ENCODE measurements at regions of chr5 and their contacts with region 1.

Region 1: DNA sequence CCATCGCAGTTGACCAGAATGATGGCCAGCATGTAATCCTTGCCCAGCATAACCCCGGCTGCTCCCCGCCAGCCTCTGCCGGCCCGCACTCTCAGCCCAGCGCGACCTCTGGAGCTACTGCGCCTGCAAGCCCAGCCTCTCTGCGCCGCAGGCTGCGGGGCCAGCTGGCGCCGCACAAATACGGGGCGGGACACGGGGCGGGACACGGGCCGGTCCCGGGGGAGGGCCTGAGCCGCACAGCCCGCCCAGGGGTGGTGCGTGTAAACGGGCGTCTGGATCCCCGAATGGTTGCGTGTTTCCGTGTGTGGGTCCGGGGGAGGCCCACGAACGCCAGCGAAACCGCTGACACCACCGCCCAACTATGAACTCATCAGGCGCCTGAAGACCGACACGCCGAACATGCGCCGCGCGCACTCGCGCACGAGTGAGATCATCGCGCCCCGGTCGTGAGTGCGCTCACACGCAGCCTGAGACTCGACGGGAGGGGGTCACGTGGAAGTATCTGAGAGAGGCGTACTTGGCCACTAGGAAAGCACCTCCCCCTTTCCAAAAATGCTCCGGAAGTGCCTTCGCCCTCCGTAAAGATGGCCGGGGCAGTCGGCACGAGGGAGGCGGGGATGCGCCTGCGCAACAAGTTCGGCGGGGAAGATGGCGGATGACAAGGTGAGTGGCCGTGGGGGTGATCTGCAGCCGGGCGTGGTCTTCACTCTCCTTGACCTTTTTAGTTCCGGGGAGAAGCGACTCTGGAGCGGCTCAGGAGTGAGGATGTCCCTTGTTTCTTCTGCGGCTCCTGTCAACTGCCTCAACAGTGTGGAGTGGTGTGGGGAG is at the starts of genes APBB3 and SLC35A4:
- DNase-seq: peak; percentile 97
- H3K4me3 ChIP-seq: peak within 1 kb of the TSS; percentile 48 to 63 (median 57)
- H3K27ac ChIP-seq: peak within 1 kb of the TSS; percentile 92 to 94 (median 93)
- H3K4me1 ChIP-seq: peaks cover 20 to 38% (median 25%) of the 10 kb centered on the region in 4 donors
- H3K27me3 ChIP-seq: no peaks in the 10 kb centered on the region
- CTCF ChIP-seq: peak in 1 of 5 experiments; percentile 7
- EP300 ChIP-seq: peak; percentile 56
- POLR2A ChIP-seq: peak; percentile 94
- total RNA-seq, gene APBB3: 20.1 to 42.5 (median 37.4) TPM
- total RNA-seq, gene SLC35A4: 39.4 to 75.5 (median 52.6) TPM

Region 2: DNA sequence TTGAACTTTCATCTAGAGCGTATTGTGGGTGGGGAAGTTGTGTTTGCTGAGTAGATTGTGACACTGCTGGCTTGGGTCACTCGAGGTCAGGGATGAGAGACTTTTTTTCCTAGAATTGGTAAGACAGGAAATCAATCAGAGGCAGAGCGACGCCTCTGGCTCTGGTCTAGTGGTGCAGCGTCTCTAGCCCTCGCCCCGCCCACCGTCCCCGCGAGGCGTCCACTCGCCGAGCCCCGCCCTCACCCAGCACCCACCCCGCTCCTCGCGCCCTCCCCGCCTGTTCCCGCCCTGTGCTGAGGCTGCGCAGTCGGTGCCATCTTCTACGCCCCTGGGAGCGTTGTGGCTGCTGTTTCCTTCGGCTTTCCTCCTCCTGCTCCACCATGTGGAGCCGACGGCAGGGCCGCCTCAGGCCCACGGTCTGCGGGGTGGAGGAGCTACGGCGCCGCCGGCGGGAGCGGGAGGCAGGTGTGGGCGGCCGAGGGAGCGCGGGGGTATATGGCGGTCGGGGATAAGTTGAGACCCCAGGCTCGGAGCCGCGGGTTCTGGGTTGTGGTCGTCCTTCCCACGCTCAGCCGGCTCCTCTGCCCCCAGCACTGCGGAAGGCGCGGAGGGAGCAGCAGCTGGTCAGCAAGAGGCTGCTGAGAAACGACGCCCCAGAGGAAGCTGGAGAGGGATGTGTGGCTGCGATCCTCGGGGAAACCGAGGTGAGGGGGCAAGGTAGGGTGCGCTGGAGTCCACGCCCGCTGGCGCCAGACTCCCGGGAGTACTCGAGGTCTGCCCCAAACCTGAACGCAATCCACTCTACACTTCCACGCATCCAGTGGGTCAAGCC is 75.0 kb after region 1 on chr5 and contains the start of gene TMCO6:
- in situ Hi-C with region 1: loop called in 2 of 4 experiments (anchors 10 kb)
- intact Hi-C with region 1: loop called (anchors 5 kb)
- DNase-seq: peak; percentile 99
- H3K4me3 ChIP-seq: peak within 1 kb of the TSS; percentile 62 to 95 (median 65)
- H3K27ac ChIP-seq: peak within 1 kb of the TSS; percentile 90 to 97 (median 92)
- H3K4me1 ChIP-seq: peaks cover 0 to 20% (median 14%) of the 10 kb centered on the region in 4 donors
- H3K27me3 ChIP-seq: no peaks in the 10 kb centered on the region
- CTCF ChIP-seq: peak; percentile 59 to 83 (median 70)
- EP300 ChIP-seq: no peak
- POLR2A ChIP-seq: peak; percentile 75
- total RNA-seq, gene TMCO6: 0.75 to 99.2 (median 40.2) TPM

Region 3: GRCh38 chr5:140664359-140665119 is 100.1 kb after region 1 on chr5 and contains the start of gene WDR55:
- in situ Hi-C with region 1: loop called in 1 of 4 experiments (anchors 25 kb)
- intact Hi-C with region 1: no loop called
- DNase-seq: peak; percentile 98
- H3K4me3 ChIP-seq: peak within 1 kb of the TSS; percentile 73 to 87 (median 79)
- H3K27ac ChIP-seq: peak within 1 kb of the TSS; percentile 88 to 95 (median 94)
- H3K4me1 ChIP-seq: peaks cover 12 to 27% (median 13%) of the 10 kb centered on the region in 4 donors
- H3K27me3 ChIP-seq: no peaks in the 10 kb centered on the region
- CTCF ChIP-seq: no peak
- EP300 ChIP-seq: peak; percentile 1
- POLR2A ChIP-seq: peak; percentile 93
- total RNA-seq, gene WDR55: 33.3 to 76.6 (median 36.1) TPM

Region 4: GRCh38 chr5:140700177-140701144 is 136.1 kb after region 1 on chr5 and contains the start of gene ZMAT2:
- in situ Hi-C with region 1: loop called in 1 of 4 experiments (anchors 10 kb)
- intact Hi-C with region 1: no loop called
- DNase-seq: peak; percentile 97
- H3K4me3 ChIP-seq: peak within 1 kb of the TSS; percentile 47 to 97 (median 72)
- H3K27ac ChIP-seq: peak within 1 kb of the TSS; percentile 65 to 88 (median 82)
- H3K4me1 ChIP-seq: peaks cover 0 to 18% (median 12%) of the 10 kb centered on the region in 4 donors
- H3K27me3 ChIP-seq: no peaks in the 10 kb centered on the region
- CTCF ChIP-seq: no peak
- EP300 ChIP-seq: no peak
- POLR2A ChIP-seq: peak; percentile 84
- total RNA-seq, gene ZMAT2: 6.7 to 41.3 (median 23.1) TPM

Region 5: GRCh38 chr5:140741967-140742366 is 177.6 kb after region 1 on chr5:
- in situ Hi-C with region 1: no loop called
- intact Hi-C with region 1: no loop called
- DNase-seq: no peak
- H3K4me3 ChIP-seq: no peak overlapping the region
- H3K27ac ChIP-seq: no peak overlapping the region
- H3K4me1 ChIP-seq: no peaks in the 10 kb centered on the region
- H3K27me3 ChIP-seq: peaks cover 10% of the 10 kb centered on the region
- CTCF ChIP-seq: no peak
- EP300 ChIP-seq: no peak
- POLR2A ChIP-seq: no peak